ENCODE measurements at regions of chr5 and their contacts with region 1.

Region 1: GRCh38 chr5:154461531-154461930 is 15.7 kb downstream of the SAP30L start:
- DNase-seq: no peak
- H3K4me3 ChIP-seq: no peak overlapping the region
- H3K27ac ChIP-seq: no peak overlapping the region
- H3K4me1 ChIP-seq: peaks cover 0 to 18% of the 10 kb centered on the region in 2 experiments; a peak in 1 of 4 replicates
- H3K27me3 ChIP-seq: no peaks in the 10 kb centered on the region
- CTCF ChIP-seq: peak; percentile 39
- EP300 ChIP-seq: no peak
- RAD21 ChIP-seq: peak; percentile 44

Region 2: DNA sequence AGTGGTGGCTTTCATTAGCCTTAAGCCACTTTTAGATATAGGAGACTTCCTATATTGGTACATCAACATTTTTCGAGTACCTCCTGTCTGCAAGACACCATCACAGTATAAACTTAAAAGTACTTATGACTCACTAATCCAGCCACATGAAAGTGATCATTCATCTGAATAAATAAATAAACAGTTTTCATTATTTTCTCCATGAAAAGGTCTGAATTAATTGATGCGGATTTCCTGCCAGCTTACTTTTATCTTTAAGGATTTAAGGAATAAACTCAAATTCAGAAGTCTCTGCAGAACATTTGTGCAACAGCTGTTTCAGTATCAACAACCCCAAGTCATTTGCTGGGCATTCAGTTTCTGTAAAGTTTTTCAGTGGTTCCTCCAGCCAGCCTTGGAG is 11.7 kb before region 1 on chr5:
- CTCF ChIA-PET with region 1: interaction called, 19 read pairs
- POLR2A ChIA-PET with region 1: no interaction called
- DNase-seq: no peak
- H3K4me3 ChIP-seq: no peak overlapping the region
- H3K27ac ChIP-seq: no peak overlapping the region
- H3K4me1 ChIP-seq: peaks cover 0 to 11% of the 10 kb centered on the region in 2 experiments; a peak in 3 of 4 replicates
- H3K27me3 ChIP-seq: no peaks in the 10 kb centered on the region
- CTCF ChIP-seq: no peak
- EP300 ChIP-seq: no peak
- RAD21 ChIP-seq: no peak

Region 3: GRCh38 chr5:154593071-154593470 is 131.5 kb after region 1 on chr5:
- CTCF ChIA-PET with region 1: no interaction called
- POLR2A ChIA-PET with region 1: no interaction called
- DNase-seq: no peak
- H3K4me3 ChIP-seq: no peak overlapping the region
- H3K27ac ChIP-seq: no peak overlapping the region
- H3K4me1 ChIP-seq: no peaks in the 10 kb centered on the region; a peak in 1 of 4 replicates
- H3K27me3 ChIP-seq: no peaks in the 10 kb centered on the region
- CTCF ChIP-seq: no peak
- EP300 ChIP-seq: no peak
- RAD21 ChIP-seq: no peak